ENCODE measurements at regions of chr3 and their contacts with region 1.

Region 1: DNA sequence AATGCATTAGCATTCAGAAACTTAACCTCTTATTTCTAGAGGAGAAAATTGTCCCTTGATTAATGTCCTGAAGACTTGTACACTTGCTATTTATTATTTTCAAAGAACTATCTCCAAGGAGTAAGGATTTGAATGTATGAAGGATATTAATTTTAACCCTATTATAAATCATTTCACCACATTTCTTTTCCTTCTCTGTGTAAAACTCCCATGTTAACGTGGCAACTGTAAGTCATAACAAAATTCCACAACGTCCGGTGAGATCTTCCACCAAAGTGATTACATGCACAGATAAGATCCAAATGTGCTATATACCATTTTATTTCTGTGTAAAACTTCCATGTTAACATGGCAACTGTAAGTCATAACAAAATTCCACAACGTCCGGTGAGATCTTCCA is 229.1 kb upstream of the ARHGEF26 start:
- DNase-seq: peak; percentile 28
- H3K4me3 ChIP-seq: no peak overlapping the region
- H3K27ac ChIP-seq: peak overlapping the region; percentile 69
- H3K4me1 ChIP-seq: peaks cover 8% of the 10 kb centered on the region
- H3K27me3 ChIP-seq: no peaks in the 10 kb centered on the region
- CTCF ChIP-seq: no peak
- POLR2A ChIP-seq: no peak

Region 2: GRCh38 chr3:153052096-153052460 is 840.0 kb before region 1 on chr3:
- CTCF ChIA-PET with region 1: no interaction called
- POLR2A ChIA-PET with region 1: no interaction called
- dilution Hi-C with region 1: no loop called
- intact Hi-C with region 1: loop called (anchors 1 kb)
- DNase-seq: peak; percentile 91
- H3K4me3 ChIP-seq: no peak overlapping the region
- H3K27ac ChIP-seq: peak overlapping the region; percentile 95
- H3K4me1 ChIP-seq: peaks cover 22% of the 10 kb centered on the region
- H3K27me3 ChIP-seq: no peaks in the 10 kb centered on the region
- CTCF ChIP-seq: no peak
- POLR2A ChIP-seq: no peak

Region 3: GRCh38 chr3:153628591-153628990 is 263.5 kb before region 1 on chr3:
- CTCF ChIA-PET with region 1: no interaction called
- POLR2A ChIA-PET with region 1: no interaction called
- dilution Hi-C with region 1: no loop called
- intact Hi-C with region 1: loop called (anchors 2 kb)
- DNase-seq: peak; percentile 98
- H3K4me3 ChIP-seq: no peak overlapping the region
- H3K27ac ChIP-seq: peak overlapping the region; percentile 98
- H3K4me1 ChIP-seq: peaks cover 61% of the 10 kb centered on the region
- H3K27me3 ChIP-seq: no peaks in the 10 kb centered on the region
- CTCF ChIP-seq: no peak
- POLR2A ChIP-seq: no peak

Region 4: DNA sequence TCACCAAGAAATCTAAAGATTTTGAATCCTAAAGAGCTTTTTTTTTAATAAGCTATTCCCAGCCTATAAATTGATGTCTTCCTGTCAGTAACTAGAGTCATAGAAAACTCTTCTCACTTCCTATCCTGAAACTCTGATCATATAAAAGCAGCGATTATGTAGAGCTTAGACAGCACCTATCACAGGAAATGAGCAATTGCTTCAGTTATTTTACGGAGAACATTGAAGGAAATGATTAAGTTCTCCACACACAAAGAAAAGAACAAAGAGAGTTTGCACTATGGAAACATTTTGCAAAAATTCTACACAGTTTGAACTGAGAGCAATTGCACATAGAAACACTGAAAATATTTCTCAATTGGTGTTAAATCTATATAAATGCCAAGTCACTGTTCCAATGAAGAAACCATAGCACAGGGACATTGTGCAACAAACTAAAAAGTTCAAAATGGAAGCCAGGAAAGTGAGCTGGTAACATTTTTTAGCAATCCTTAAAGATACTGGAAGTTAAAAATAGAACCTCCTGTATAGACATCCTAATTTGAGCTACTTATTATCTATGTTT is 62.4 kb before region 1 on chr3:
- CTCF ChIA-PET with region 1: no interaction called
- POLR2A ChIA-PET with region 1: no interaction called
- dilution Hi-C with region 1: no loop called
- intact Hi-C with region 1: loop called (anchors 1 kb)
- DNase-seq: peak; percentile 88
- H3K4me3 ChIP-seq: peak overlapping the region in 1 of 3 experiments; percentile 16
- H3K27ac ChIP-seq: peak overlapping the region; percentile 93
- H3K4me1 ChIP-seq: peaks cover 20% of the 10 kb centered on the region
- H3K27me3 ChIP-seq: no peaks in the 10 kb centered on the region
- CTCF ChIP-seq: no peak
- POLR2A ChIP-seq: peak; percentile 36